ENCODE measurements at regions of chr11 and their contacts with region 1.

Region 1: GRCh38 chr11:110376711-110377324 is 52.9 kb upstream of the FDX1 start:
- DNase-seq: peak; percentile 47
- H3K4me3 Mint-ChIP-seq: no peak overlapping the region
- H3K27ac Mint-ChIP-seq: no peak overlapping the region
- H3K4me1 Mint-ChIP-seq: peaks cover 16% of the 10 kb centered on the region
- H3K27me3 Mint-ChIP-seq: peaks cover 6% of the 10 kb centered on the region

Region 2: GRCh38 chr11:109853156-109853776 is 523.6 kb before region 1 on chr11:
- CTCF ChIA-PET with region 1: no interaction called
- intact Hi-C with region 1: loop called (anchors 5 kb)
- DNase-seq: peak; percentile 9
- H3K4me3 Mint-ChIP-seq: no peak overlapping the region
- H3K27ac Mint-ChIP-seq: no peak overlapping the region
- H3K4me1 Mint-ChIP-seq: no peaks in the 10 kb centered on the region
- H3K27me3 Mint-ChIP-seq: no peaks in the 10 kb centered on the region

Region 3: GRCh38 chr11:110173811-110174644 is 202.8 kb before region 1 on chr11:
- CTCF ChIA-PET with region 1: interaction called, 4 read pairs
- intact Hi-C with region 1: loop called (anchors 1 kb)
- DNase-seq: peak; percentile 83
- H3K4me3 Mint-ChIP-seq: no peak overlapping the region
- H3K27ac Mint-ChIP-seq: no peak overlapping the region
- H3K4me1 Mint-ChIP-seq: peaks cover 6% of the 10 kb centered on the region
- H3K27me3 Mint-ChIP-seq: peaks cover 4% of the 10 kb centered on the region

Region 4: GRCh38 chr11:110185121-110185591 is 191.7 kb before region 1 on chr11:
- CTCF ChIA-PET with region 1: no interaction called
- intact Hi-C with region 1: no loop called
- DNase-seq: no peak
- H3K4me3 Mint-ChIP-seq: no peak overlapping the region
- H3K27ac Mint-ChIP-seq: no peak overlapping the region
- H3K4me1 Mint-ChIP-seq: no peaks in the 10 kb centered on the region
- H3K27me3 Mint-ChIP-seq: no peaks in the 10 kb centered on the region

Region 5: DNA sequence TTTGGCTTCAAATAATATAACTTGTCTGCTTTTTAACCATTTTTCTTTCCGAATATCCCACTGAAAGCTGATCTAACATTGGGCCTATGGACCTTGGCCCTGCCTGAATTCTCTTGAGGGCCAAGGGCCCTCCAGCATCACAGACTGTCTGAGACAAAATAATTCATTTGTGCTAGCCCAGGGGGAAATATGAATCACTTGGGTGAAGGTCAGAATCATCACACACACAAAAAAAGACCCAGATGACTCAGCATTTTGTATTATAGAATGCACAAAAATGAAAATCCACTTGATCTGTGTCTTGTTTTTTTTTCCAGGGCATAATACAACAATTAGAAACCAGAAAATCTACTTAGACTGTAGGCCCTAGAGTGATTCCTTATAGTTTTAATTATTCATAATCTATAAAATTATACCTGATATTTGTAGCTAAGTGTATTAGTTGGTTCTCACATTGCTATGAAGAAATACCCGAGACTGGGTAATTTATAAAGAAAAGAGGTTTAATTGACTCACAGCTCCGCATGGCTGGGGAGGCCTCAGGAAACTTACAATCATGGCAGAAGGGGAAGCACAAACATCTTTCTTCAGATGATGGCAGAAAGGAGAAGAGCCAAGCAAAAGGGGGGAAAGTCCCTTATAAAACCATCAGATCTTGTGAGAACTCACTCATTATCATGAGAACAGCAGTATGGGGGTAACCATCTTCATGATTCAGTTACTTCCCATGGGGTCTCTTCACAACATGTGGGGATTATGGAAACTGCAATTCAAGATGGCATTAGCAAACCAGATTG is 64.8 kb before region 1 on chr11:
- CTCF ChIA-PET with region 1: interaction called, 3 read pairs
- intact Hi-C with region 1: loop called (anchors 1 kb)
- DNase-seq: peak; percentile 34
- H3K4me3 Mint-ChIP-seq: no peak overlapping the region
- H3K27ac Mint-ChIP-seq: peak overlapping the region; percentile 83
- H3K4me1 Mint-ChIP-seq: peaks cover 12% of the 10 kb centered on the region
- H3K27me3 Mint-ChIP-seq: no peaks in the 10 kb centered on the region

Region 6: GRCh38 chr11:110356756-110357671 is 19.8 kb before region 1 on chr11:
- CTCF ChIA-PET with region 1: interaction called, 3 read pairs
- intact Hi-C with region 1: loop called (anchors 1 kb)
- DNase-seq: no peak
- H3K4me3 Mint-ChIP-seq: no peak overlapping the region
- H3K27ac Mint-ChIP-seq: peak overlapping the region; percentile 65
- H3K4me1 Mint-ChIP-seq: peaks cover 20% of the 10 kb centered on the region
- H3K27me3 Mint-ChIP-seq: peaks cover 3% of the 10 kb centered on the region

Region 7: GRCh38 chr11:110467556-110467955 is 90.7 kb after region 1 on chr11:
- CTCF ChIA-PET with region 1: no interaction called
- intact Hi-C with region 1: no loop called
- DNase-seq: no peak
- H3K4me3 Mint-ChIP-seq: no peak overlapping the region
- H3K27ac Mint-ChIP-seq: no peak overlapping the region
- H3K4me1 Mint-ChIP-seq: no peaks in the 10 kb centered on the region
- H3K27me3 Mint-ChIP-seq: no peaks in the 10 kb centered on the region

Region 8: DNA sequence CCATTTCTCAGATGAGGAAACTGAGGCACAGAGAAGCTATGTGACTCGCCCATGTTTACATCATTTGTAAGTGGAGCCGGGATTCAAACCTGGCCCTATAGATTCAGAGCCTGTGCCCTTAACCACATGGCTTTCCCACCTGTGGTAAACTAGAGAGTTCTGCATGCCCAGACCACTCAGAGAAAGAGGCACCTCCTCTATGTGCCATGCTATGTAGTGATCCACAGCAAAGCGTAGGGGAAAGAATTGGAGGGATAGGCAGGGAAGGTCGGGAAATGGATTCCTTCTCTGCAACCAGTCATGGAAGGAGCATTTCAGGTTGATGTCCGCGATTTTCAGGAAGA is 853.3 kb after region 1 on chr11:
- CTCF ChIA-PET with region 1: no interaction called
- intact Hi-C with region 1: loop called (anchors 5 kb)
- DNase-seq: no peak
- H3K4me3 Mint-ChIP-seq: no peak overlapping the region
- H3K27ac Mint-ChIP-seq: no peak overlapping the region
- H3K4me1 Mint-ChIP-seq: peaks cover 12% of the 10 kb centered on the region
- H3K27me3 Mint-ChIP-seq: peaks cover 24% of the 10 kb centered on the region